SK-N-SH (cell line): ENCODE measurements at regions of chr1 and their contacts with region 1.

Region 1: GRCh38 chr1:234114648-234115307 is 210.3 kb downstream of the SLC35F3 start:
- DNase-seq: peak; percentile 54
- H3K4me3 ChIP-seq: peak overlapping the region; percentile 7 to 44; a peak in 3 of 4 replicates
- H3K27ac ChIP-seq: no peak overlapping the region
- H3K4me1 ChIP-seq: peaks cover 0 to 5% of the 10 kb centered on the region in 2 experiments; a peak in 2 of 4 replicates
- H3K27me3 ChIP-seq: no peaks in the 10 kb centered on the region
- CTCF ChIP-seq: peak; percentile 84
- EP300 ChIP-seq: no peak
- RAD21 ChIP-seq: peak; percentile 87

Region 2: DNA sequence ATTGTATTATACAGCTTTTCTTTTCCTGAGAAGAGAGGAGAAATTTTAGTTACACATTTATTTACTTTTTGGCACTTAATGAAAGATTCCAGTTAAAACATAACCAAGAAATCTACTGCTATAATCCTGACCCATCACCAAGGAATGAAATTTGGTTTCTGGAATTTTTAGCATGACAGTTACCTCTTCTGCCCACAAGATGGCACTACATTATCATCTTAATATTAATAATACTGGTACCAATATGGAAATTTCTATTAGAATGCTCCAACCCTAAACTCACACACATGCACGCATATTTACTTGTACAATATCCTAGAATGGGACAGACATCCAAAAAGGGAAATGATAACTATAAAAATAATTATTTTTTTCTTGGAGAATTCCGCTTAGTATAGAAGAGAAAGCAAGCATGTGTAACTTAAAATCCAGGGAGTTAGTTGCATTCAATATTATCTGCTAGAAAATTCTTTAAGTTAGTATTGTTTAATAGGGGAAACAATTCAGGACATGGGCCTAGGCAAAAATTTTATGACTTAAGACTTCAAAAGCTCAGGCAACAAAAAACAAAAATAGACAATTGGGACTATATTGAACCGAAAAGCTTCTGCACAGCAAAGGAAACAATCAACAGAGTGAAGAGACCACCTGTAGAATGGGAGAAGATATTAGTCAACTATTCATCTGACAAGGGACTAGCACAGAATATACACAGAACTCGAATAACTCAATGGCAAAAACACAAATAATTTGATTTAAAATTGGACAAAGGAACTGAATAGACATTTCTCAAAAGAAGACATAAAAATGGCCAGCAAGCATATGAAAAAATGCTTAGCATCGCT is 749.9 kb before region 1 on chr1:
- CTCF ChIA-PET with region 1: interaction called, 25 read pairs
- POLR2A ChIA-PET with region 1: no interaction called
- DNase-seq: peak; percentile 34
- H3K4me3 ChIP-seq: no peak overlapping the region
- H3K27ac ChIP-seq: no peak overlapping the region
- H3K4me1 ChIP-seq: no peaks in the 10 kb centered on the region
- H3K27me3 ChIP-seq: no peaks in the 10 kb centered on the region
- CTCF ChIP-seq: peak; percentile 82
- EP300 ChIP-seq: no peak
- RAD21 ChIP-seq: peak; percentile 74

Region 3: GRCh38 chr1:233448109-233448689 is 666.6 kb before region 1 on chr1:
- CTCF ChIA-PET with region 1: interaction called, 10 read pairs
- POLR2A ChIA-PET with region 1: no interaction called
- DNase-seq: peak; percentile 67
- H3K4me3 ChIP-seq: no peak overlapping the region
- H3K27ac ChIP-seq: peak overlapping the region in 1 of 2 experiments; percentile 90; a peak in 2 of 4 replicates
- H3K4me1 ChIP-seq: peaks cover 0 to 17% of the 10 kb centered on the region in 2 experiments; a peak in 2 of 4 replicates
- H3K27me3 ChIP-seq: no peaks in the 10 kb centered on the region
- CTCF ChIP-seq: no peak
- EP300 ChIP-seq: peak in 1 of 2 experiments; percentile 75; a peak in 2 of 4 replicates
- RAD21 ChIP-seq: no peak; the same call in 1 of the 2 replicates

Region 4: GRCh38 chr1:234125283-234125682 is 10.5 kb after region 1 on chr1:
- CTCF ChIA-PET with region 1: interaction called, 35 read pairs
- POLR2A ChIA-PET with region 1: no interaction called
- DNase-seq: peak; percentile 24
- H3K4me3 ChIP-seq: no peak overlapping the region
- H3K27ac ChIP-seq: no peak overlapping the region
- H3K4me1 ChIP-seq: no peaks in the 10 kb centered on the region
- H3K27me3 ChIP-seq: no peaks in the 10 kb centered on the region
- CTCF ChIP-seq: peak; percentile 56
- EP300 ChIP-seq: no peak
- RAD21 ChIP-seq: peak; percentile 61

Region 5: DNA sequence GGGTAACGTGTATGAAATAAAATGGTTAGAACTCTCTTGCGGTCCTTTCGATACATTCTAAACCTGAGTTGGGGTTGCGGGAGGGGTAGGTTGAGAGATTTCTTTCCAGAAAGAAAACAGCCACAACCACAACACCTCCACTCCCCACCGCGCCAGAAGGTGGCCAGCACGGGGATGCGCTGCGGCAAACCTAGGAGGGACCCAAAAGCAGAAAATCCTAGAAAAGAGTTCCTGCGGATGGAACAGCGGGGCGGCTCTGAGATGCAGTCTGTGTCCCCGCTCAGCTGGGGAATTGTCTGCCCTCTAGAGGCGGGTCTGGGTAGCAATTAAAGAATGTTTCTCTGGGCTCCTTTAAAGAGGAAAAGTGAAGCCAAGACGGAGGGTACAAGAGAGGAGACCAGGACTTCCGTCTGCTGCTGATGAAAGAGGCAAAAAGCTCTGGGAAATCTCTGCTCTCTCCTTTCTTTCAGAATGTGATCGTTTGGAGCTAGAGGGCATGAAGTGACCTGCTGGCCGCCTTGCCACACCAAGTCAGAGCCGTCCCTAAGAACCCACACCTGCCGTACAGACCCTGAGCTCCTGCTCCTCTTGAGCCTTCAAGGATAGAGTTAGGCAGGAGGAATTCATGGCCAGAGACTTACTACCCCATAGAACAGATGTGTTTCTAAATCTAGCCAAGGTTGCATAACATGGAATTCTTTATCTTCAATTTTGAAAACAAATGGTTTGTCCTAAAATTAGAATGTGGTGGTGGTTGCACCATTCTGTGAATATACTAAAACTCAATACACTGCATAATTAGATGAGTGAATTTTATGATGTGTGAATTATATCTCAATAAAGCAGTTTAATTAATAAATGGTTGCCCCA is 212.0 kb after region 1 on chr1:
- CTCF ChIA-PET with region 1: interaction called, 11 read pairs
- POLR2A ChIA-PET with region 1: no interaction called
- DNase-seq: peak; percentile 72
- H3K4me3 ChIP-seq: no peak overlapping the region; a peak in 1 of 4 replicates
- H3K27ac ChIP-seq: no peak overlapping the region
- H3K4me1 ChIP-seq: peaks cover 0 to 7% of the 10 kb centered on the region in 2 experiments; a peak in 1 of 4 replicates
- H3K27me3 ChIP-seq: no peaks in the 10 kb centered on the region
- CTCF ChIP-seq: peak; percentile 76
- EP300 ChIP-seq: no peak
- RAD21 ChIP-seq: peak; percentile 69